MCF 10A (cell line): ENCODE measurements at regions of chr12 and their contacts with region 1.

Region 1: DNA sequence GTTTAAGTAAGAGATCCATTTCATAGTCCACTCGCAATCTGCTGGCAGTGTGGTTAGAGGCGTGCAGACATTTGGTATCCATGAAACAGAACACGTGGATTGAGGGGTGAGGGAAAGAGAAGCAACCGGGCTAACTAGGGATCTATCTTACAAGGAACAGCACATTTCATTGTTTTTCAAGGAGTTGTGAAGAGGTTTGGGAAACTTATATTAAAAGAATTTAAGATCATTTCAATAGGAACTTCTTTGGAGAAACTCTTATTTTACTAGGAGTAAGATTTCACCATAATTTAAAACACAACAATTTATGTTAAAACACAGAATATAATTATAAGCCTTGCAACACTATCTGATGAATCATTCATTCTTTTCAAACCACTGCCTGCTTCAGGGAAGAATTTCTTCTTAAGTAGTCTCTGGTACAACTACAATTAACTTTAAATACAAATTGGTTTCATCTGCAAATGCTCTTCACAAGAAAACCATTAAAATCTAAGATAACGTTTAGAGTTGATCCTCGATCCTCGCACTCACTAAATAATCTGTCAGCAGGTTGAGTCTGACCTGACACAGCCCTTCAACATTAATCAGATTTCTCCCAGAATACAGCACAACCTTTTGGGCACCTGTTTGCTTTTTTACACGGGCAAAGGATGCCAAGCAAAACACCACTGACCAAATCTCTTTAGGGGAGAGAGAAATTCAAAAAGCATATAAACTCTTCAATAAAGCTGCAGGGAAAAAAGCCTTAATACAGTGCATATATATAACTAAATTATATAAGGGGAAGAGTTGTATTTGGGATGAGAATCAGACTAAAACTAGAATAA is 27.3 kb downstream of the PPTC7 start:
- DNase-seq: peak; percentile 78
- H3K4me3 Mint-ChIP-seq: peak overlapping the region; percentile 49
- H3K27ac Mint-ChIP-seq: peak overlapping the region; percentile 97
- H3K4me1 Mint-ChIP-seq: peaks cover 55% of the 10 kb centered on the region
- H3K27me3 Mint-ChIP-seq: no peaks in the 10 kb centered on the region
- CTCF ChIP-seq: no peak

Region 2: DNA sequence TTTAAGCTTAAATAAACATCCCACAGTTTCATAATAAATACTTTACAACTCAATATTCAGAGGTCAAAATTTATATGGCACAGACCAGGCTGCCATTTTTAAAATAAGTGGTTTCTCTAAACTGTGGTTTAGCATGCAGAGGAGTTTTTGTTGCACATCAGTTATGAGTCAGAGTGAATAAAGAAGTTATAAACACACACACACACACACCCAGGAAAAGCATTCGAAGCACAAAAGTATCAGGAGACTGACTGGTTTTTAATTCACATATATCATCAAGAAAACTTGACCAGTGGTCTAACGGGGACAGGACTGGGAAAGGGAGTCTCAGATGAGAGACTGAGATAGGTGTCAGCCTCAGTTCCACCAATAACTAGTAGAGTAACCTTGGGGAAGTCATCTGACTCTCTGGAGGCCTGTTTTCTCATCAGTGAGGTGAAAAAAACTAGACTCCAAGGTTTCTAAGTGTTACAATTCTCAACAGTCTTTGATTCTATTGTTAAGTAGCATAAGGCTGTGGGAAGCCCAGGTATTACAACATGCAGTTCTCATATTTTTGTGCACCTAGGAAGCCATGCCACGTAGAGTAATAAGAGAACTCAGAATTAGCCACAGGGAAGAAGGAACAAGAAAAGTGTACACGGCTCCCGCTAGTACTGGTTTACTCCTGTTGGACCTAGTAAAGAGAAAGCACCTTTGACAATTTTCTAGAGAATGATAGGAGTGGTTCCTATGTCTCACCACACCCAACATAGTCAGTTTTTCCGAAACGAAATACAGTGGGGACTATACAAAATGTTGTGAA is 22.1 kb after region 1 on chr12:
- CTCF ChIA-PET with region 1: interaction called, 35 read pairs
- POLR2A ChIA-PET with region 1: interaction called, 336 read pairs
- intact Hi-C with region 1: loop called (anchors 1 kb)
- DNase-seq: peak; percentile 93
- H3K4me3 Mint-ChIP-seq: peak overlapping the region; percentile 96
- H3K27ac Mint-ChIP-seq: peak overlapping the region; percentile 97
- H3K4me1 Mint-ChIP-seq: peaks cover 26% of the 10 kb centered on the region
- H3K27me3 Mint-ChIP-seq: no peaks in the 10 kb centered on the region
- CTCF ChIP-seq: no peak